B cell (primary cell): ENCODE measurements at regions of chr19 and their contacts with region 1.

Region 1: GRCh38 chr19:44800461-44800860 is 8.4 kb upstream of the BCAM start:
- DNase-seq: peak; percentile 79
- ATAC-seq: peak; percentile 80
- H3K4me3 ChIP-seq: no peak overlapping the region
- H3K4me3 Mint-ChIP-seq: no peak overlapping the region
- H3K27ac ChIP-seq: no peak overlapping the region
- H3K27ac Mint-ChIP-seq: no peak overlapping the region
- H3K4me1 ChIP-seq: peaks cover 11 to 22% of the 10 kb centered on the region in 2 donors
- H3K4me1 Mint-ChIP-seq: peaks cover 8% of the 10 kb centered on the region
- H3K27me3 ChIP-seq: peaks cover 0 to 9% (median under 1%) of the 10 kb centered on the region in 4 experiments
- H3K27me3 Mint-ChIP-seq: peaks cover 25% of the 10 kb centered on the region
- CTCF ChIP-seq: peak; percentile 68

Region 2: GRCh38 chr19:44746946-44747738 is 53.3 kb before region 1 on chr19:
- CTCF ChIA-PET with region 1: no interaction called
- POLR2A ChIA-PET with region 1: no interaction called
- intact Hi-C with region 1: no loop called
- DNase-seq: peak; percentile 89
- ATAC-seq: peak; percentile 67
- H3K4me3 ChIP-seq: peak overlapping the region; percentile 58 to 95 (median 81)
- H3K4me3 Mint-ChIP-seq: peak overlapping the region; percentile 95
- H3K27ac ChIP-seq: peak overlapping the region; percentile 84 to 89
- H3K27ac Mint-ChIP-seq: peak overlapping the region; percentile 93
- H3K4me1 ChIP-seq: peaks cover 42 to 56% of the 10 kb centered on the region in 2 donors
- H3K4me1 Mint-ChIP-seq: peaks cover 51% of the 10 kb centered on the region
- H3K27me3 ChIP-seq: no peaks in the 10 kb centered on the region
- H3K27me3 Mint-ChIP-seq: no peaks in the 10 kb centered on the region
- CTCF ChIP-seq: no peak

Region 3: DNA sequence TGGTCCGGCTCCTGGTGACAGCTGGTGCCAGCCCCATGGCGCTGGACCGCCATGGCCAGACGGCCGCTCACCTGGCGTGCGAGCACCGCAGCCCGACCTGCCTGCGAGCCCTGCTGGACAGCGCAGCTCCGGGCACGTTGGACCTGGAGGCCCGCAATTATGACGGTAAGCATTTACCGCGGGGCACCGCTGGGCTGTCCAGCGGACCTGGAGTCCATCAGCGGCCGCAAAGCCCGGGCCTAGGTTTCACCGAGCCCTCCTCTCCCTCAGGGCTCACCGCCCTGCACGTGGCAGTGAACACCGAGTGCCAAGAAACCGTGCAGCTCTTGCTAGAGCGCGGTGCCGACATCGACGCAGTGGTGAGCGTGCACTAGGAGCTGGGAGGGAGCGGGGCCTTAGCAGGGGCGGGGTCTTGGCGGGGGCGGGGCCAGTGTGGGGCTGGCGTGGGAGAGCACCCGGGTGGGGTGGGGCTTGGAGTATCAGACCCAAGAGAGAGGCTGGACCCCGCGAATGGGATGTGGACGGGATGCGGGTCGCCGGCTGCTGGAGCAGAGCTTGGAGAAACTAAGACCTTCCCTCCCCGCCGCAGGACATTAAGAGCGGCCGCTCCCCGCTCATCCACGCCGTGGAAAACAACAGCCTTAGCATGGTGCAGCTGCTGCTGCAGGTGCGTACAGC is 43.3 kb before region 1 on chr19:
- CTCF ChIA-PET with region 1: no interaction called
- POLR2A ChIA-PET with region 1: no interaction called
- intact Hi-C with region 1: no loop called
- DNase-seq: no peak
- ATAC-seq: no peak
- H3K4me3 ChIP-seq: no peak overlapping the region
- H3K4me3 Mint-ChIP-seq: no peak overlapping the region
- H3K27ac ChIP-seq: no peak overlapping the region
- H3K27ac Mint-ChIP-seq: no peak overlapping the region
- H3K4me1 ChIP-seq: peaks cover 24 to 34% of the 10 kb centered on the region in 2 donors
- H3K4me1 Mint-ChIP-seq: peaks cover 40% of the 10 kb centered on the region
- H3K27me3 ChIP-seq: no peaks in the 10 kb centered on the region
- H3K27me3 Mint-ChIP-seq: no peaks in the 10 kb centered on the region
- CTCF ChIP-seq: no peak

Region 4: GRCh38 chr19:45245334-45245787 is 444.9 kb after region 1 on chr19 and contains the start of gene EXOC3L2:
- CTCF ChIA-PET with region 1: no interaction called
- POLR2A ChIA-PET with region 1: no interaction called
- intact Hi-C with region 1: loop called (anchors 10 kb)
- DNase-seq: no peak
- ATAC-seq: no peak
- H3K4me3 ChIP-seq: no peak within 1 kb of the TSS
- H3K4me3 Mint-ChIP-seq: no peak within 1 kb of the TSS
- H3K27ac ChIP-seq: no peak within 1 kb of the TSS
- H3K27ac Mint-ChIP-seq: no peak within 1 kb of the TSS
- H3K4me1 ChIP-seq: peaks cover under 1 to 9% of the 10 kb centered on the region in 2 donors
- H3K4me1 Mint-ChIP-seq: peaks cover 5% of the 10 kb centered on the region
- H3K27me3 ChIP-seq: no peaks in the 10 kb centered on the region
- H3K27me3 Mint-ChIP-seq: peaks cover 11% of the 10 kb centered on the region
- CTCF ChIP-seq: no peak
- total RNA-seq, gene EXOC3L2: not detected in 2 replicates